ENCODE measurements at regions of chr2 and their contacts with region 1.

Region 1: DNA sequence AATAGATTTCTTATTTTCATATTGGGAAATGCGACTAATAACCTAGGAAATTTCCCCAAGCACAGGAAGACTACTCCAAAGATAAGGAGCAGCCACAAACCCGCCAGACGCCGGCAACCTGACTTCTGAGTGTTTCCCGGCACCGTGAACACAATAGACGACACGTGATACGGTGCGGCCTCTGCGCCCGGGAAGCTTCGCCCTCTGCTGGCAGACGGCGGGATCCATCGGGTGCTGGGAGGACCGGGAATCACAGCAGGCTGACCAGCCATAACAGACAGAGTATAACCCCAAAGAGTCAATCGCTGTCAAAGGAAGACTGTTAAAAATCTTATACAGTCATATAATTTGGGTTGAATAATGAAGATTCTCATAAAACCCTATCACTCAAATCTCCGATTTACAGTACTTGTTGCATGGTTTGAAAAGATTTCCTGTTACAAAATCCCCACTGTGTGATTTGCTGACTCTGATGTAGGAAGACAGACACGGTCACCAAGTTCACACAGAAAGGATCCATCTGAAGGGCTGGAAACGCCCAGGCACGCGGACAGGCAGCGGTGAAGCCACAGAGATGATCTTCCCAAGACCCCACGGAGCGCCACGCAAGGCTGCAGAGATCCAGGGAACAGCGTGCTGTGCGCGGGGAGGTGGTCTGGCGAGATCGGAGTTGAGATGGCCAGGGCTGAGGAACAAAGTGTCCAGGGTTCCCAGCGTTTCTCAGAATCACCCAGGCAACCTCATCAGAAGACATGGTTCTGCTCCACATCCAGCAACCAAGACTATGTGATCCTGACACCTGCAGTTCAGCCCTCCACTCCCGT is 73.8 kb downstream of the EIPR1 start:
- DNase-seq: peak; percentile 54 to 85 (median 71)
- ATAC-seq: peak; percentile 96
- H3K4me3 ChIP-seq: no peak overlapping the region
- H3K4me3 Mint-ChIP-seq: no peak overlapping the region
- H3K27ac ChIP-seq: no peak overlapping the region
- H3K27ac Mint-ChIP-seq: peak overlapping the region; percentile 75
- H3K4me1 ChIP-seq: peaks cover 9% of the 10 kb centered on the region
- H3K4me1 Mint-ChIP-seq: peaks cover 14% of the 10 kb centered on the region
- H3K27me3 ChIP-seq: no peaks in the 10 kb centered on the region
- H3K27me3 Mint-ChIP-seq: no peaks in the 10 kb centered on the region
- CTCF ChIP-seq: peak; percentile 97

Region 2: GRCh38 chr2:2127467-2127866 is 1176.3 kb before region 1 on chr2:
- CTCF ChIA-PET with region 1: no interaction called
- POLR2A ChIA-PET with region 1: no interaction called
- intact Hi-C with region 1: loop called in 1 of 2 experiments (anchors 10 kb)
- DNase-seq: no peak
- ATAC-seq: no peak
- H3K4me3 ChIP-seq: no peak overlapping the region
- H3K4me3 Mint-ChIP-seq: no peak overlapping the region
- H3K27ac ChIP-seq: no peak overlapping the region
- H3K27ac Mint-ChIP-seq: no peak overlapping the region
- H3K4me1 ChIP-seq: no peaks in the 10 kb centered on the region
- H3K4me1 Mint-ChIP-seq: no peaks in the 10 kb centered on the region
- H3K27me3 ChIP-seq: no peaks in the 10 kb centered on the region
- H3K27me3 Mint-ChIP-seq: peaks cover 17% of the 10 kb centered on the region
- CTCF ChIP-seq: no peak

Region 3: DNA sequence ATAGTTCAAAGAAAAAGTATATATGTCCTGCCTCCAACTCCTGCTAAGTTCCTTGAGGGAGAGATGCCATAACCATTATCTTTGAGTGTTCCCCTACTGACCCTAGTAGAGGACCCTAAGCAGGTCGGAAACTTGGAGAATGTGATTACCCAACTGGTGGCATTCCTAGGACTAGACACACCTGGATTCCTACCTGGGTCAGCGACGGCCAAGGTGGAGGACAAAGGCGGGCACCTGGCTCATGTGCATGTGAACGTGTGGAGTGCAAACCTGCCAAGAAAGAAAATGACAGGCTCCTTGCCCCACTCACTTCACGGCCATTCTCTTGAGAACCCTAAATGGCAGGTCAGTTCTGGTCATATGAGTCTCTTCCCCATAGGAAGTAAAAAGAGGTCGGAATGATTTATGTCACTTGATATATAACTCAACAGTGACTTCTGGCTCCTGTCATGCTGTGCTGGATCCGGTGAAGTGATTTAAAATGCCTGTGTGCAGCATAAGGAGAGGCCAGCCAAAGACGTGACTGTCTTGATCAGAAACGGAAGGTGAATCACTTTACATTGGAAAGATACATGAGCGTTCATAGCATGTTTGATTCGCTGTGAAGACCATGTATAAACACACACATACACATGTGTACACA is 297.8 kb before region 1 on chr2:
- CTCF ChIA-PET with region 1: no interaction called
- POLR2A ChIA-PET with region 1: no interaction called
- intact Hi-C with region 1: loop called in 1 of 2 experiments (anchors 2 kb)
- DNase-seq: no peak
- ATAC-seq: no peak
- H3K4me3 ChIP-seq: no peak overlapping the region
- H3K4me3 Mint-ChIP-seq: no peak overlapping the region
- H3K27ac ChIP-seq: no peak overlapping the region
- H3K27ac Mint-ChIP-seq: no peak overlapping the region
- H3K4me1 ChIP-seq: no peaks in the 10 kb centered on the region
- H3K4me1 Mint-ChIP-seq: no peaks in the 10 kb centered on the region
- H3K27me3 ChIP-seq: peaks cover 3 to 7% of the 10 kb centered on the region in 2 experiments
- H3K27me3 Mint-ChIP-seq: peaks cover 67% of the 10 kb centered on the region
- CTCF ChIP-seq: no peak

Region 4: GRCh38 chr2:3126911-3127621 is 176.7 kb before region 1 on chr2:
- CTCF ChIA-PET with region 1: no interaction called
- POLR2A ChIA-PET with region 1: no interaction called
- intact Hi-C with region 1: no loop called
- DNase-seq: peak in 6 of 14 experiments; percentile 2 to 38 (median 19)
- ATAC-seq: peak; percentile 68
- H3K4me3 ChIP-seq: peak overlapping the region; percentile 14
- H3K4me3 Mint-ChIP-seq: peak overlapping the region; percentile 46
- H3K27ac ChIP-seq: no peak overlapping the region
- H3K27ac Mint-ChIP-seq: peak overlapping the region; percentile 75
- H3K4me1 ChIP-seq: peaks cover 9% of the 10 kb centered on the region
- H3K4me1 Mint-ChIP-seq: peaks cover 6% of the 10 kb centered on the region
- H3K27me3 ChIP-seq: no peaks in the 10 kb centered on the region
- H3K27me3 Mint-ChIP-seq: no peaks in the 10 kb centered on the region
- CTCF ChIP-seq: no peak

Region 5: GRCh38 chr2:3179208-3179607 is 124.6 kb before region 1 on chr2:
- CTCF ChIA-PET with region 1: interaction called, 3 read pairs
- POLR2A ChIA-PET with region 1: no interaction called
- intact Hi-C with region 1: loop called (anchors 2 to 10 kb)
- DNase-seq: peak in 1 of 14 experiments; percentile 19
- ATAC-seq: no peak
- H3K4me3 ChIP-seq: no peak overlapping the region
- H3K4me3 Mint-ChIP-seq: no peak overlapping the region
- H3K27ac ChIP-seq: no peak overlapping the region
- H3K27ac Mint-ChIP-seq: no peak overlapping the region
- H3K4me1 ChIP-seq: no peaks in the 10 kb centered on the region
- H3K4me1 Mint-ChIP-seq: no peaks in the 10 kb centered on the region
- H3K27me3 ChIP-seq: no peaks in the 10 kb centered on the region
- H3K27me3 Mint-ChIP-seq: no peaks in the 10 kb centered on the region
- CTCF ChIP-seq: no peak

Region 6: GRCh38 chr2:3207091-3207491 is 96.7 kb before region 1 on chr2:
- CTCF ChIA-PET with region 1: no interaction called
- POLR2A ChIA-PET with region 1: no interaction called
- intact Hi-C with region 1: loop called in 1 of 2 experiments (anchors 5 kb)
- DNase-seq: no peak
- ATAC-seq: no peak
- H3K4me3 ChIP-seq: no peak overlapping the region
- H3K4me3 Mint-ChIP-seq: no peak overlapping the region
- H3K27ac ChIP-seq: no peak overlapping the region
- H3K27ac Mint-ChIP-seq: no peak overlapping the region
- H3K4me1 ChIP-seq: no peaks in the 10 kb centered on the region
- H3K4me1 Mint-ChIP-seq: peaks cover 7% of the 10 kb centered on the region
- H3K27me3 ChIP-seq: no peaks in the 10 kb centered on the region
- H3K27me3 Mint-ChIP-seq: no peaks in the 10 kb centered on the region
- CTCF ChIP-seq: no peak

Region 7: GRCh38 chr2:3223080-3223923 is 80.5 kb before region 1 on chr2:
- CTCF ChIA-PET with region 1: interaction called, 4 read pairs
- POLR2A ChIA-PET with region 1: no interaction called
- intact Hi-C with region 1: loop called in 1 of 2 experiments (anchors 1 kb)
- DNase-seq: peak in 13 of 14 experiments; percentile 14 to 93 (median 56)
- ATAC-seq: peak; percentile 70
- H3K4me3 ChIP-seq: no peak overlapping the region
- H3K4me3 Mint-ChIP-seq: no peak overlapping the region
- H3K27ac ChIP-seq: peak overlapping the region; percentile 52 to 92
- H3K27ac Mint-ChIP-seq: peak overlapping the region; percentile 92
- H3K4me1 ChIP-seq: peaks cover 31% of the 10 kb centered on the region
- H3K4me1 Mint-ChIP-seq: peaks cover 38% of the 10 kb centered on the region
- H3K27me3 ChIP-seq: no peaks in the 10 kb centered on the region
- H3K27me3 Mint-ChIP-seq: no peaks in the 10 kb centered on the region
- CTCF ChIP-seq: no peak

Measured in CD4-positive, alpha-beta T cell (primary cell).